ENCODE measurements at regions of chr4 and their contacts with region 1.

Region 1: GRCh38 chr4:53196882-53197771 is 168.7 kb downstream of the SCFD2 start:
- DNase-seq: peak; percentile 34 to 53 (median 48)
- H3K4me3 ChIP-seq: no peak overlapping the region
- H3K4me3 Mint-ChIP-seq: no peak overlapping the region
- H3K27ac ChIP-seq: no peak overlapping the region
- H3K27ac Mint-ChIP-seq: no peak overlapping the region
- H3K4me1 ChIP-seq: no peaks in the 10 kb centered on the region
- H3K4me1 Mint-ChIP-seq: no peaks in the 10 kb centered on the region
- H3K27me3 ChIP-seq: no peaks in the 10 kb centered on the region
- H3K27me3 Mint-ChIP-seq: peaks cover 0 to 2% (median 0%) of the 10 kb centered on the region in 3 donors
- CTCF ChIP-seq: peak; percentile 78

Region 2: GRCh38 chr4:53273726-53274125 is 76.6 kb after region 1 on chr4:
- intact Hi-C with region 1: no loop called
- DNase-seq: no peak
- H3K4me3 ChIP-seq: no peak overlapping the region
- H3K4me3 Mint-ChIP-seq: no peak overlapping the region
- H3K27ac ChIP-seq: no peak overlapping the region
- H3K27ac Mint-ChIP-seq: no peak overlapping the region
- H3K4me1 ChIP-seq: no peaks in the 10 kb centered on the region
- H3K4me1 Mint-ChIP-seq: no peaks in the 10 kb centered on the region
- H3K27me3 ChIP-seq: no peaks in the 10 kb centered on the region
- H3K27me3 Mint-ChIP-seq: no peaks in the 10 kb centered on the region
- CTCF ChIP-seq: no peak

Region 3: DNA sequence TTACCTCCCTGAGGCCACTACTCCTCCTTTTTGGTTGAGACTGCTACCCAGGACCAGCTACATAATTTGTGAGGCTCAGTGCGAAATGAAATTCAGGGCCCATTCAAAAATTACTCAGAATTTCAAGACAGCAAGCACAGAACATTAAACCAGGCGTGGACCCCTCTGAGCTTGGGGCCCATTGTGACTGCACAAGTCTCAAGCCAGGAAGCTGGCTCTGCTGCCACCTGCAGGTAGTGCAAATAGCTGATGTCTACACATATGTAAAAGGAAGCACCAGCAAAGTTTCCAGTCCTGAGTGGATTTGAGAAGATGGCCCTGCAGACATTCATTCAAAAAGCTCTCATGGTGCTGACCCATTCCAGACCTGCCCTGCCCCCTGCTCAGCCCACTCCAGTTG is 607.6 kb after region 1 on chr4:
- intact Hi-C with region 1: loop called in 1 of 2 experiments (anchors 10 kb)
- DNase-seq: peak in 2 of 3 donors; percentile 21 to 27
- H3K4me3 ChIP-seq: no peak overlapping the region
- H3K4me3 Mint-ChIP-seq: no peak overlapping the region
- H3K27ac ChIP-seq: no peak overlapping the region
- H3K27ac Mint-ChIP-seq: no peak overlapping the region
- H3K4me1 ChIP-seq: no peaks in the 10 kb centered on the region
- H3K4me1 Mint-ChIP-seq: no peaks in the 10 kb centered on the region
- H3K27me3 ChIP-seq: no peaks in the 10 kb centered on the region
- H3K27me3 Mint-ChIP-seq: peaks cover 0 to 6% (median 0%) of the 10 kb centered on the region in 3 donors
- CTCF ChIP-seq: peak; percentile 38